Activated CD4-positive, alpha-beta T cell treated with anti-CD3 and anti-CD28 coated beads for 36 hours (primary cell): ENCODE measurements at regions of chr1 and their contacts with region 1.

Region 1: DNA sequence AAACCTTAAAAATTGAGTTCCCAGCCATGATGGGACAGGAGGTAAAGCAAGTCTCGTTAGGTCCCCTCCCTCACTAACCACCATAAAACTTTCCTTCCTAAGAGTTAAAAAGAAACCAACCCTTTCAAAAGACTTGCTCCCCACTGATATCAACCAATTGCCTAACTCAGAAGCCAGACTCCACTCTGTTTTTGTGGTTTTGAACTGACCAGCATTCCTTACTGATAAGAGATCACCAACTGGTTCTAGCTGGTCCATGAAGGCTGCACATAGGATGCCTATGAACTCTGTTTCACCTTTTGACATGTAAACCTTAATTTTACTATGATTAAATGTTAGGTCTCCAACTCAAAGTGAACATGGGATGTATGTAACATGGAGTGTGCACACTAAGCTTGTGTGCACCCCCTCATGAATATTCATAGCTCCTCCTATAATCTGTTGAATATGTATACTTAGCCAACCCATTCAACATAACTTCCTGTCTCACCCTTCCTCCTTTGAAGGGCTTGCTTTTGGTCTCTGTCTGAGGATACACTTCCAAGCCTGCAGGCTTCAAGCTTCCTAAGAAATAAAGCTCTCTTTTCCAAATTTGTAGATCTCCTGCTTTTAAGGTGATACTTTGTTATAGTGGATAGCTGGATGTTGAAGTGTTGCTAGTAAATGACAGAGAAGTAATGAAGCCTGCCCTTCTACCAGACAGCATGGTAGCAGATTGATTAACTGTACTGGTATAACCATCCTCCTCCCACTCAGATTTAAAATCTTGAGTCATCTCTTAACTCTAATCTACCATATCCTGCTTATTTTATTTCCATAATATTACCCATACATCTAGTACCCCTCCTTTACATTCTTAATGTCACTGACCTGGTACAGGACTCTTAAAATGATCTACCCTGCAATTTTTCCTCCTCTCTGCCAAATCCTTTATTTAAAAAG is 95.6 kb downstream of the ZNF644 start:
- DNase-seq: no peak
- ATAC-seq: peak; percentile 61
- H3K4me3 Mint-ChIP-seq: no peak overlapping the region
- H3K27ac Mint-ChIP-seq: no peak overlapping the region
- H3K4me1 Mint-ChIP-seq: peaks cover 65% of the 10 kb centered on the region
- H3K27me3 Mint-ChIP-seq: no peaks in the 10 kb centered on the region

Region 2: GRCh38 chr1:90948301-90948700 is 22.1 kb after region 1 on chr1:
- CTCF ChIA-PET with region 1: interaction called, 5 read pairs
- POLR2A ChIA-PET with region 1: no interaction called
- intact Hi-C with region 1: loop called in 1 of 2 experiments (anchors 2 kb)
- DNase-seq: no peak
- ATAC-seq: no peak
- H3K4me3 Mint-ChIP-seq: no peak overlapping the region
- H3K27ac Mint-ChIP-seq: no peak overlapping the region
- H3K4me1 Mint-ChIP-seq: peaks cover 35% of the 10 kb centered on the region
- H3K27me3 Mint-ChIP-seq: no peaks in the 10 kb centered on the region

Region 3: GRCh38 chr1:91065337-91065736 is 139.1 kb after region 1 on chr1:
- CTCF ChIA-PET with region 1: no interaction called
- POLR2A ChIA-PET with region 1: no interaction called
- intact Hi-C with region 1: no loop called
- DNase-seq: no peak
- ATAC-seq: no peak
- H3K4me3 Mint-ChIP-seq: no peak overlapping the region
- H3K27ac Mint-ChIP-seq: no peak overlapping the region
- H3K4me1 Mint-ChIP-seq: peaks cover 2% of the 10 kb centered on the region
- H3K27me3 Mint-ChIP-seq: peaks cover 14% of the 10 kb centered on the region

Region 4: DNA sequence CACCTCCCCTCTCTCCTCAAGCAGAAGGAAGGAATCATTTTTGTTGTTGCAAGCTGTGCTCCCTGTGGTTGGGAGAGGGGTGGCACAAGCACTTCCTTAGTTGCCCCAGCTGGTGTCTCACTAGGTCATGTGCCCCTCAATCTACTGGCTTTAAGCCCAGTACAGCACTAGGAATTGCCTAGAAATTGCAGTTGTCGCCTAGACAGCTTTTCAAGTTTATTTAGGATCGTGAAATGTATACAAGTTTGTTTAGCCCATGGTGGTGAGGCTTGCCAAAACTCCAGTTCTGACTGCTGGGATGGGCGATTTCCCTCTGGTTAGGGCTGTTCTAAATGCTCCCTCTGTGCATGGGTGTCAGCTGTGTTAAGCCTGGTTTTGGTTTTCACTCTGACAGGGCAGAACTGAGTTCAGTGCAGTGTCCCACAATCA is 222.5 kb after region 1 on chr1:
- CTCF ChIA-PET with region 1: no interaction called
- POLR2A ChIA-PET with region 1: no interaction called
- intact Hi-C with region 1: no loop called
- DNase-seq: no peak
- ATAC-seq: no peak
- H3K4me3 Mint-ChIP-seq: no peak overlapping the region
- H3K27ac Mint-ChIP-seq: no peak overlapping the region
- H3K4me1 Mint-ChIP-seq: no peaks in the 10 kb centered on the region
- H3K27me3 Mint-ChIP-seq: peaks cover 10% of the 10 kb centered on the region